GM12878 (cell line): ENCODE measurements at regions of chr20 and their contacts with region 1.

Region 1: GRCh38 chr20:14829906-14830305 is 492.5 kb upstream of the FLRT3 start:
- DNase-seq: peak; percentile 86
- ATAC-seq: peak; percentile 82
- H3K4me3 ChIP-seq: no peak overlapping the region
- H3K27ac ChIP-seq: peak overlapping the region; percentile 46; the same call in 1 of the 2 replicates
- H3K4me1 ChIP-seq: peaks cover 40% of the 10 kb centered on the region
- H3K27me3 ChIP-seq: no peaks in the 10 kb centered on the region
- CTCF ChIP-seq: no peak
- EP300 ChIP-seq: peak; percentile 60 to 79; a peak in 3 of 4 replicates
- POLR2A ChIP-seq: no peak
- RAD21 ChIP-seq: no peak

Region 2: DNA sequence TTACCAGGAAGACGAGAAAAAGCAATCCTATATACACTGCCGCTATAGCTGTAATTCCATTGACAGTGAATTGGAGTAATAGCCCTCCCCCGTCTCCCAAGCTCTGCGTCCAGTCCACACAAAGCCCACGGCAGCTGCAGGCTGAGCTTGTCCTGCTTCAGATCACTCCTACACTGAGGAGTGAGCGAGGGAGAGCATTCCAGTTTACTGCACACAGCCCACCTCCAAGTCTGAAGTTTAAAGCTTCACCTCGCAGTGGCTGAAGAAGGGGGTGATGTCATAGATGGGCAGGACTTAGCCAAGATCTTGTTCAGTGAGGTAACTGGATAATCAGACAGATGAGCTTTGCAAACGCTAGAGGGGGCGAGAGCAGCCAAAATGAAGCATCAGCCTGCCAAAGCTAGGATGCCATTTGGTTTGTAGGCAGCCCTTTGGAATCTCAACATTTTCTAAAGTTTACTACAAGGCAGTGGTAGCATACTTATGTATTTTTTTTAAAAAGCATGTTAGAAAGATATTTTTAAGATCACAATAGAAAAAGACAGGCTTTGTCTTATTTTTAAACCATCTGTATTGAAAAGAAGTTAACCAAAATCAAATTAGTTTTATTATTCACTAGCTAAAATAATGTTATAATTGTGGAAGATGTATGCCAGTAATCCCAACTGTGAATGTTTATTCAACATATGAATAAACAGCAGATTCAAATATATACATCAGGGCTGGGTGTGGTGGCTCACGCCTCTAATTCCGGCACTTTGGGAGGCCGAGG is 492.3 kb before region 1 on chr20 and contains the start of gene FLRT3:
- CTCF ChIA-PET with region 1: no interaction called
- POLR2A ChIA-PET with region 1: no interaction called
- RAD21 ChIA-PET with region 1: no interaction called
- SMC1A ChIA-PET with region 1: no interaction called
- in situ Hi-C with region 1: no loop called
- intact Hi-C with region 1: loop called (anchors 2 kb)
- DNase-seq: peak; percentile 70
- ATAC-seq: peak; percentile 93
- H3K4me3 ChIP-seq: no peak within 1 kb of the TSS
- H3K27ac ChIP-seq: no peak within 1 kb of the TSS
- H3K4me1 ChIP-seq: no peaks in the 10 kb centered on the region
- H3K27me3 ChIP-seq: no peaks in the 10 kb centered on the region
- CTCF ChIP-seq: peak; percentile 70 to 85 (median 75)
- EP300 ChIP-seq: no peak
- POLR2A ChIP-seq: no peak
- RAD21 ChIP-seq: peak; percentile 69
- polyA plus RNA-seq, gene FLRT3: 0.47 to 1.0 TPM

Region 3: DNA sequence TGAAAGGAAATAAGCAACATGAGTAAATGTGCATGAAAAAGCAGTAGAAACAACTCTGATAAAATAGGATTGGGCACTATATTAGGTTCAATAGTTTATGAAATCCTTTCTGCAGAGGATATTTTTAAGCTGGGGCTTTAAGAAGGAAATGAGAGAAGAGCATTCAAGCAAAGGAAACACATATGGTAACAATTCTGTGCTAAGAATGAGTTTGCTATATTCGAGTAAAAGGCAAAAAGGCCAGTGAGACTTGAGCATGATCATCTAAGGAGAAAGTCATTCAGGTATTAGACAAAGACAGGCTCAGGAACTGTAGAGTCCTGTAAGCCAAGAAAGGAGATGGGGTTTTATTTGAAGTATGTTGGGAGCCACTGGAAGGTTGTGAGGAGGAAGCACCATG is 105.4 kb before region 1 on chr20:
- CTCF ChIA-PET with region 1: no interaction called
- POLR2A ChIA-PET with region 1: interaction called, 3 read pairs
- RAD21 ChIA-PET with region 1: no interaction called
- SMC1A ChIA-PET with region 1: interaction called, 4 read pairs
- in situ Hi-C with region 1: no loop called
- intact Hi-C with region 1: loop called (anchors 5 kb)
- DNase-seq: no peak
- ATAC-seq: peak; percentile 46
- H3K4me3 ChIP-seq: no peak overlapping the region
- H3K27ac ChIP-seq: 0 out of 2 replicates have a peak overlapping the region, but pooled peaks have one; percentile 32
- H3K4me1 ChIP-seq: no peaks in the 10 kb centered on the region
- H3K27me3 ChIP-seq: no peaks in the 10 kb centered on the region
- CTCF ChIP-seq: no peak
- EP300 ChIP-seq: no peak
- POLR2A ChIP-seq: no peak
- RAD21 ChIP-seq: no peak

Region 4: GRCh38 chr20:14865169-14865568 is 35.3 kb after region 1 on chr20:
- CTCF ChIA-PET with region 1: no interaction called
- POLR2A ChIA-PET with region 1: no interaction called
- RAD21 ChIA-PET with region 1: interaction called, 4 read pairs
- SMC1A ChIA-PET with region 1: interaction called, 10 read pairs
- in situ Hi-C with region 1: no loop called
- intact Hi-C with region 1: no loop called
- DNase-seq: no peak
- ATAC-seq: peak; percentile 21; the same call in 1 of the 3 replicates
- H3K4me3 ChIP-seq: no peak overlapping the region
- H3K27ac ChIP-seq: no peak overlapping the region
- H3K4me1 ChIP-seq: peaks cover 9% of the 10 kb centered on the region
- H3K27me3 ChIP-seq: no peaks in the 10 kb centered on the region
- CTCF ChIP-seq: no peak
- EP300 ChIP-seq: no peak
- POLR2A ChIP-seq: no peak
- RAD21 ChIP-seq: no peak

Region 5: GRCh38 chr20:14902432-14903089 is 72.7 kb after region 1 on chr20:
- CTCF ChIA-PET with region 1: no interaction called
- POLR2A ChIA-PET with region 1: no interaction called
- RAD21 ChIA-PET with region 1: no interaction called
- SMC1A ChIA-PET with region 1: interaction called, 4 read pairs
- in situ Hi-C with region 1: no loop called
- intact Hi-C with region 1: loop called (anchors 2 kb)
- DNase-seq: peak; percentile 87
- ATAC-seq: peak; percentile 99
- H3K4me3 ChIP-seq: no peak overlapping the region
- H3K27ac ChIP-seq: peak overlapping the region; percentile 13; the same call in 1 of the 2 replicates
- H3K4me1 ChIP-seq: peaks cover 9% of the 10 kb centered on the region; the same call in 1 of the 2 replicates
- H3K27me3 ChIP-seq: no peaks in the 10 kb centered on the region
- CTCF ChIP-seq: no peak
- EP300 ChIP-seq: peak in 1 of 2 experiments; percentile 50; a peak in 2 of 4 replicates
- POLR2A ChIP-seq: no peak
- RAD21 ChIP-seq: no peak

Region 6: DNA sequence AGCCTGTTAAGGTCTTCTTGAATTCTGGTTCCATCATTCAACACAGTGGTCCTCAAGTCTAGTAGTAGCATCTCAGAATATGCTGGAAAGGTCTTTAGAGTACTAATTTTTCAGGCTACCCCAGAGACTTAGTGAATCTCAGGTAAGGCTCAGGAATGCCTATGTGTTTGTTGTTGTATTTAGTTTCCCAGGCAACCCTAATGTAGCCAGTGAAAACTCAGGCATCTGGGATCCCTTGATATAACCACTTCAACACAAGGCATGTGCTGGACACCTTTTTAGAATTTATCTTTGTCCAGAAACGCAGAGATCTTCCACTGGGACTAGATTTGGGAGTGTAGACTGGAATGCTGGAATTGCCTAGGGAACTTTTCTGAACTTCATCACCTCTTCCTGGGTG is 105.4 kb after region 1 on chr20:
- CTCF ChIA-PET with region 1: no interaction called
- POLR2A ChIA-PET with region 1: no interaction called
- RAD21 ChIA-PET with region 1: no interaction called
- SMC1A ChIA-PET with region 1: no interaction called
- in situ Hi-C with region 1: no loop called
- intact Hi-C with region 1: no loop called
- DNase-seq: no peak
- ATAC-seq: no peak
- H3K4me3 ChIP-seq: no peak overlapping the region
- H3K27ac ChIP-seq: no peak overlapping the region
- H3K4me1 ChIP-seq: no peaks in the 10 kb centered on the region
- H3K27me3 ChIP-seq: no peaks in the 10 kb centered on the region
- CTCF ChIP-seq: no peak
- EP300 ChIP-seq: no peak
- POLR2A ChIP-seq: no peak
- RAD21 ChIP-seq: no peak

Region 7: GRCh38 chr20:15236812-15237211 is 406.9 kb after region 1 on chr20:
- CTCF ChIA-PET with region 1: no interaction called
- POLR2A ChIA-PET with region 1: no interaction called
- RAD21 ChIA-PET with region 1: no interaction called
- SMC1A ChIA-PET with region 1: no interaction called
- in situ Hi-C with region 1: no loop called
- intact Hi-C with region 1: loop called (anchors 2 kb)
- DNase-seq: peak; percentile 38
- ATAC-seq: peak; percentile 96
- H3K4me3 ChIP-seq: no peak overlapping the region
- H3K27ac ChIP-seq: no peak overlapping the region
- H3K4me1 ChIP-seq: no peaks in the 10 kb centered on the region
- H3K27me3 ChIP-seq: no peaks in the 10 kb centered on the region
- CTCF ChIP-seq: peak; percentile 56 to 66 (median 61)
- EP300 ChIP-seq: no peak
- POLR2A ChIP-seq: no peak
- RAD21 ChIP-seq: peak; percentile 87